PC-9 (cell line): ENCODE measurements at regions of chrX and their contacts with region 1.

Region 1: DNA sequence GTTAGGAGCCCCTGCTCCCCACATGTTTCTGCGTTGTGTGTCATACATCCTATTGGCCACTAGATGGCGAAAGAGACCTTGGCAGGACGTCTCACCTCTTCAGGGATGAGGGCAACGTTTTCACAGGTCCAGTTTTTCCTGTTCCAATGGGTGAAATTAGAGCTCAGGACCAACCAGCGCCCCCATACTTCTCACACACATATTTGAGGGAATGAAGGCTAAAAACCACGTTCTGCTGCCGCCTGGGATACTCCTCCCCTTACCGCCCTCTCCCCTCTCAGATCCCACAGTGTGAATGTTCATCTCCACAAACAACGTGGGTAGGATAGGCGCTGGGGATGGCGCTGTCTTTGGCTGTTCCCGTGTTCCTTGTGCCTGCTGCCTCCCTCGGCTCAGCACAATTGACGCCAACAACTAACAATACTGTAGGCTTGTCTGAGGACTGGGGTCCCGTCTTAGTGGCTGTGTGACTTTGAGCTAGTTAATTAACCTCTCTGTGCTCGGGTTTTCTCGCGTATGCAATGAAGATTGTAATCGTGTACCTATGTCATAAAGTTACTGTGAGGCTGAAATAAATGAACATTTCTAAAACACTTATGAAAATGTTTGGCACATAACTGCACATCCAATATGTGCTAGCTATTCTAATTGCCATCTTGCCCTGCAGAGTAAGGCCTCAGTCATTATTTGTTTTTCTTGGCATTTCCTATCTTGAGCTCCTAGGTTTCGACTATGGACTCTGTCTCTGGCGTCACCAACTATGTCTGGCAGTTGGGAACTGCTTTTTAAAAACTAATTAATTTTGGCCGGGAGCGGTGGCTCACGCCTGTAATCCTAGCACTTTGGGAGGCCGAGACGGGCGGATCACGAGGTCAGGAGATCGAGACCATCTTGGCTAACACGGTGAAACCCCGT is 181.3 kb upstream of the STK26 start:
- DNase-seq: peak; percentile 45 to 78
- H3K4me3 ChIP-seq: peak overlapping the region; percentile 25; the same call in 1 of the 2 replicates
- H3K27ac ChIP-seq: no peak overlapping the region
- H3K4me1 ChIP-seq: peaks cover 11% of the 10 kb centered on the region
- H3K27me3 ChIP-seq: no peaks in the 10 kb centered on the region
- CTCF ChIP-seq: peak; percentile 96

Region 2: GRCh38 chrX:132071260-132071659 is 229.5 kb after region 1 on chrX:
- CTCF ChIA-PET with region 1: interaction called, 12 read pairs
- POLR2A ChIA-PET with region 1: no interaction called
- intact Hi-C with region 1: loop called (anchors 2 kb)
- DNase-seq: peak in 1 of 2 experiments; percentile 38
- H3K4me3 ChIP-seq: no peak overlapping the region
- H3K27ac ChIP-seq: no peak overlapping the region
- H3K4me1 ChIP-seq: no peaks in the 10 kb centered on the region; the same call in 1 of the 2 replicates
- H3K27me3 ChIP-seq: no peaks in the 10 kb centered on the region
- CTCF ChIP-seq: peak; percentile 72

Region 3: GRCh38 chrX:132257116-132257515 is 415.4 kb after region 1 on chrX:
- CTCF ChIA-PET with region 1: no interaction called
- POLR2A ChIA-PET with region 1: no interaction called
- intact Hi-C with region 1: no loop called
- DNase-seq: no peak
- H3K4me3 ChIP-seq: no peak overlapping the region
- H3K27ac ChIP-seq: no peak overlapping the region
- H3K4me1 ChIP-seq: no peaks in the 10 kb centered on the region
- H3K27me3 ChIP-seq: no peaks in the 10 kb centered on the region
- CTCF ChIP-seq: no peak